Activated CD4-positive, alpha-beta T cell treated with anti-CD3 and anti-CD28 coated beads for 36 hours (primary cell): ENCODE measurements at regions of chr3 and their contacts with region 1.

Region 1: GRCh38 chr3:153628591-153628990 is 466.6 kb downstream of the RAP2B start:
- DNase-seq: peak; percentile 8
- ATAC-seq: peak; percentile 27
- H3K4me3 Mint-ChIP-seq: no peak overlapping the region
- H3K27ac Mint-ChIP-seq: peak overlapping the region; percentile 40
- H3K4me1 Mint-ChIP-seq: peaks cover 86% of the 10 kb centered on the region
- H3K27me3 Mint-ChIP-seq: no peaks in the 10 kb centered on the region

Region 2: DNA sequence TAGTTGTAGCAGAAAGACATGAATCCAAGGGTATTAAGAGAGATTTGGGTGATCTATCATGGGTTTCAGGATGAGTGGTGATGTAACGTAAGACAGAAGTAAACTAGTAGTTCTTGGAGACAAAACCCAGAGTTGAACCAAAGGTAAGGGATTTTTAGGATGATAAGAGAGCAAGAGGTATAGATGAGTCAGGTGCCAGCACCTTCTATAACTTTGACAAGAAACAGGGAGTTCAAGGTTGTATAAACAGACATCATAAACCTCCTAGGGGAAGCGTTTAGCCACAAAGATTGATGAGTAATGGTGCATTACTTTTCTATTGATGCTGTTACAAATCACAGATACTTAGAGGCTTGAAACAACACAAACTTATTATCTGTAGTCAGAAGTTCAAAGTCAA is 45.3 kb after region 1 on chr3:
- CTCF ChIA-PET with region 1: no interaction called
- POLR2A ChIA-PET with region 1: no interaction called
- intact Hi-C with region 1: loop called in 1 of 2 experiments (anchors 2 kb)
- DNase-seq: no peak
- ATAC-seq: peak; percentile 93
- H3K4me3 Mint-ChIP-seq: no peak overlapping the region
- H3K27ac Mint-ChIP-seq: no peak overlapping the region
- H3K4me1 Mint-ChIP-seq: peaks cover 12% of the 10 kb centered on the region
- H3K27me3 Mint-ChIP-seq: no peaks in the 10 kb centered on the region